ENCODE measurements at regions of chr11 and their contacts with region 1.

Region 1: GRCh38 chr11:64304316-64305072 is 830 bp upstream of the ESRRA start:
- DNase-seq: peak; percentile 95
- H3K4me3 ChIP-seq: peak overlapping the region; percentile 81
- H3K27ac ChIP-seq: peak overlapping the region; percentile 96
- H3K4me1 ChIP-seq: peaks cover 32% of the 10 kb centered on the region
- CTCF ChIP-seq: peak; percentile 98

Region 2: DNA sequence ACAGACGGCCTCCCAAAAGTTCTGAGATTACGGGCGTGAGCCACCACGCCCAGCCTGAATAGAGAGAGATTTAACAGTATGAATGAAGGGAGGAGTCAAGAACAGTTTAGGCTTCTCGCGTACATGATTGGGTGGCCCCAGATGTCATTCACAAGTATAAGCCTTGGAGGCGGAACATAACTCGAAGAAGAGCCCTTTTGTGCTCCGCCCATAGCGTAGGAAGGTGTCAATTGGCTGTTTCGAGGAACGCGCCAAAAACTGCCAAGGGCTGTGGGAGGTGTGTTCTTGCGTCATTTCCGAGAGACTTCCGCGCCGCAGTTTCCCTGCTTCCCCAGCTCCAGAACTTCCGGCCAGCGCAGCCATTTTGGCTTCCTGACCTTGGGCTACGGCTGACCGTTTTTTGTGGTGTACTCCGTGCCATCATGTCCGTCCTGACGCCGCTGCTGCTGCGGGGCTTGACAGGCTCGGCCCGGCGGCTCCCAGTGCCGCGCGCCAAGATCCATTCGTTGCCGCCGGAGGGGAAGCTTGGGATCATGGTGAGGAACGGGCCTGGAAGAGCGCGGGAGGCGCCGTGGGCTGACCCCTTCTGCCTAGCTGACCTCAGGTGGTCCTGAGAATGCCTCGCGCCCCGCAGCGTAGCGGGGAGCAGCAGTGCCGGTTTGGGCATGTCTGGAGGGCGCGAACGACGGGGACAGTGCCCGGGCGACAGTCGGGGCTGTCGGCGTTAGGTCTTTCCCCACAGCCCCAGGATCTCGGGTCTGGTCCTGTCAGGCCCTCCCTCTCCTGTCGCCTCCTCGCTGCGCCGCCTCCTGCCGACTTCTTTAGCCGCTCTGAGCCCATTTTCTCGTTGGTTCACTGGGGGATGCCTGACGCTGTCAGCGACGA is 330.0 kb before region 1 on chr11 and contains the start of gene COX8A:
- CTCF ChIA-PET with region 1: no interaction called
- POLR2A ChIA-PET with region 1: no interaction called
- intact Hi-C with region 1: loop called (anchors 10 kb)
- DNase-seq: peak; percentile 100
- H3K4me3 ChIP-seq: peak within 1 kb of the TSS; percentile 89
- H3K27ac ChIP-seq: peak within 1 kb of the TSS; percentile 73
- H3K4me1 ChIP-seq: peaks cover 15% of the 10 kb centered on the region
- CTCF ChIP-seq: no peak
- total RNA-seq, gene COX8A: 523 and 811 TPM in 2 replicates

Region 3: GRCh38 chr11:64204464-64204989 is 100.0 kb before region 1 on chr11:
- CTCF ChIA-PET with region 1: interaction called, 14 read pairs
- POLR2A ChIA-PET with region 1: interaction called, 5 read pairs
- intact Hi-C with region 1: loop called (anchors 1 kb)
- DNase-seq: peak; percentile 85
- H3K4me3 ChIP-seq: no peak overlapping the region
- H3K27ac ChIP-seq: peak overlapping the region; percentile 96
- H3K4me1 ChIP-seq: peaks cover 35% of the 10 kb centered on the region
- CTCF ChIP-seq: peak; percentile 90

Region 4: DNA sequence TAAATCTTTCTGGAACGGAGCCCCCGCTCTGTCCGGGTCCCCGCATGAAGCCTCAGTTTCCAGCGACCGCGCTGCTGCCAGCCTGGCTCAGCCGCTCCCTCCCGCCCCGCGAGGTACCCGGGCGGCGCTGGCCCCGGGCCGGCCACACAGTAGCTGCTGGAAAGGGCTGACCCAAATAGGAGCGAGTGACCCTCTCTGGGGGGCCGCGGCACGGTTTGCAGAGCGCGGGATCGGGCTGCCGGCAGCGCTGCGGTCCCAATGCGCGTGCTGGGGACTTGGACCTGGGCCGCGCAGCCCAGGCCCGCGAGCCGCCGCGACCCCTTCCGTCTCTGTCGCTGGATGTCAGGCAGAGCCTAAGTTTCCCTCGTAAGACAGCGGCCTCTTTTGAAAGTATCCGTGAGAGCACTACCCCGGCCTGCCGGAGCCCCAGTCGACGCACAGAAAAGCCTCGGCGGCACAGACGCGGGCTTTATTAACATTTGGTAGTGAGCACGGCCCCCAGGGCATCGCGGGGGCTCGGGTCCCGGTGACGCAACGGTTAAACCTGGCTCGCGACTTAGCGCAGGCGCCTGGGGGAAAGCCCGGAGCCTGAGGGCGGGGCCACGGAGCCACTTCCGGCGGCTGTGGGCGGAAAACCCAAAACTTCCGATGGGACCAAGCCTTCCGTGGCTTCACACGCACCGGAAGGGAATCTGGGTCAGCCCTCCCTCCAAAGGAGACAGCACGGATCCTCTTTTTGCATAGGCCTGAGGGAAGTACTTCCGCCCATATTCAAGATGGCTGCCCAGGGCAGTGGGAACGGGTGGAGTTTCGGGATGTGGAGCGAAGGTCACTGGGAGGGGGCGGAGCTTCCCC is 34.9 kb before region 1 on chr11:
- CTCF ChIA-PET with region 1: interaction called, 7 read pairs
- POLR2A ChIA-PET with region 1: interaction called, 10 read pairs
- intact Hi-C with region 1: loop called (anchors 1 kb)
- DNase-seq: peak; percentile 100
- H3K4me3 ChIP-seq: peak overlapping the region; percentile 86
- H3K27ac ChIP-seq: peak overlapping the region; percentile 91
- H3K4me1 ChIP-seq: peaks cover 27% of the 10 kb centered on the region
- CTCF ChIP-seq: peak; percentile 60

Region 5: GRCh38 chr11:64284962-64285884 is 19.3 kb before region 1 on chr11 and contains the start of gene GPR137:
- CTCF ChIA-PET with region 1: interaction called, 3 read pairs
- POLR2A ChIA-PET with region 1: no interaction called
- intact Hi-C with region 1: loop called (anchors 1 kb)
- DNase-seq: peak; percentile 93
- H3K4me3 ChIP-seq: peak within 1 kb of the TSS; percentile 73
- H3K27ac ChIP-seq: peak within 1 kb of the TSS; percentile 80
- H3K4me1 ChIP-seq: peaks cover 14% of the 10 kb centered on the region
- CTCF ChIP-seq: no peak
- total RNA-seq, gene GPR137: 18.3 and 19.5 TPM in 2 replicates

Region 6: DNA sequence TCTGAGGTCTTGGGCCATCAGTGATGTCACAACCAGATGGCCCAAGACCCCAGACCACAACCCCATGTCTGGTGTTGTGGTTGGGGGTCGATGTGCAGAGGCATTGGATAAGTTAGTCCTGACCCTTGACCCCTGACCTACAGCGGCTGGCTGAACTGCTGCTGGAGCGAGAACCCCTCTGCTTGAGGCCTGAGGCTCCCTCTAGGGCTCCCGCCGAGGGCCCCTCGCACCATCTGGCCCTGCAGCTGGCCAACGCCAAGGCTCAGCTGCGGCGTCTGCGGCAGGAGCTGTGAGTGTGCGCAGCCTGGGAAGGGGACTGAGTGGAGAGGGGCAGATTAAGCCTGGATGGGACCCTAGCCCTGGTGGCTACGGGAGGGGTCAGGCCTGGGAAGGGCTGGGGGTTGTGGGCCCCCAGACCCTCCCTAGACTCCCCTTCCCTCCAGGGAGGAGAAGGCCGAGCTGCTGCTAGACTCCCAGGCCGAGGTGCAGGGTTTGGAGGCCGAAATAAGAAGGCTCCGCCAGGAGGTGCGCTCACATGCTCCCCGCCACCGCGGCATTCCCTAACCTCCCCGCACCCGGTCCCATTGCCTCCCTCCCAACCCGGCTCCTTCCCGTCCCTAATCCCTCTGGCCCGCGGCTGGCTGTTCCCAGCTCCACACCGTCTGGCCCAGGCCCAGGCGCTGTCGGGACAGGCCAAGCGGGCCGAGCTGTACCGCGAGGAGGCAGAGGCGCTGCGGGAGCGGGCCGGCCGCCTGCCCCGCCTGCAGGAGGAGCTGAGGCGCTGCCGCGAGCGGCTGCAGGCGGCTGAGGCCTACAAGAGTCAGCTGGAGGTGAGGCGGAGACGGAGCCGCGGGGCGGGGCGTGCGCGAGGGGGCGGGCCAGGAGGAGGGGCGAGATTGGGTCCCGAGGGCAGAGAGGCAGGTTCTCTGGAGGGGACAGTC is 37.6 kb after region 1 on chr11:
- CTCF ChIA-PET with region 1: no interaction called
- POLR2A ChIA-PET with region 1: no interaction called
- intact Hi-C with region 1: loop called (anchors 1 kb)
- DNase-seq: peak; percentile 91
- H3K4me3 ChIP-seq: peak overlapping the region; percentile 50
- H3K27ac ChIP-seq: no peak overlapping the region
- H3K4me1 ChIP-seq: peaks cover 40% of the 10 kb centered on the region
- CTCF ChIP-seq: peak; percentile 65

Measured in OCI-LY7 (cell line).